PC-9 (cell line): ENCODE measurements at regions of chr2 and their contacts with region 1.

Region 1: DNA sequence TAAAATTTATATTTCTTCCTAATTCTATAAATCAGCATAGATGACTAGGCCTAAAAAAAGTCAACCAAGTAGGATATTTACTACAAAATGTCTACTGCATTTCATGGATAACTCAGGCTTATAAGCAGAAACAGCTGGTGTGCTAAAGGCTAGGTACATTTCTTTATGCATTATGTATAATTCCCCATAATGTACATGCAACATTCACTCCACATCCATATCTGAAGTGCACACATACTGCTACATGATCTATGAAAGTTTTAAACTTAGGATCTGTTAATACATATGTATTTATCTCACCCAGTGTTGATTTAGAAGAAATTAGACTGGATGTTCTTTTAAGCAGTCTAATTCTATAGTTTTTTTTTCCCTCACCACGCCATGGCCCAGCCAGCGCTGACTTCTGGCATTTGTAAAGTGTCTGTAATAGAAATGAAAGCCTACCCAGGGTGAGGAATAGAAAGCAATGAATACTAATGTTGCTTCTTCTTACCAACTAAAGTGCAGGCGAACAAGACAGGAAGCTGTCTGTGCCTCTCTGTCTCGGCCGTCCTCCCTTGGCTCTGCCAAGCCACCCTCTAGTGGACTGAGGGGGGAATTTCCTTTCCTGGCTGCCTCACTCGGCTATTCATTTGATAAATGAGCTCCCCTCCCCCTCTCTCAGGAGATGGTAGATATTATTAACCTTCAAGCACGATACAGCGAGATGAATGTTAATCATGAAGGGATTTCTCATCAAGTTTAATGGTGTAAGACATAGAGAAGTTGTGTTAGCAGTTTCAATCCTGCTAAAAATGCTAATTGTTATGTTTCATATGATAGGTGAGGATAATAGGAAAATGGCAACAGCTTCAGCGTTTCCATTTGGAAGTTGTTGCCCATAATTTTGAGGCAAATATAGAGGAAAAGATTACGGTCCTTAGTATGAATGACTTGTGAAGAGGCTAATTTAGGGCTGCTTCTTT is 384.5 kb downstream of the MTX2 start:
- DNase-seq: peak in 1 of 2 experiments; percentile 64
- H3K4me3 ChIP-seq: no peak overlapping the region
- H3K27ac ChIP-seq: no peak overlapping the region
- H3K4me1 ChIP-seq: no peaks in the 10 kb centered on the region
- H3K27me3 ChIP-seq: peaks cover 8% of the 10 kb centered on the region; the same call in 1 of the 2 replicates
- CTCF ChIP-seq: peak; percentile 84

Region 2: DNA sequence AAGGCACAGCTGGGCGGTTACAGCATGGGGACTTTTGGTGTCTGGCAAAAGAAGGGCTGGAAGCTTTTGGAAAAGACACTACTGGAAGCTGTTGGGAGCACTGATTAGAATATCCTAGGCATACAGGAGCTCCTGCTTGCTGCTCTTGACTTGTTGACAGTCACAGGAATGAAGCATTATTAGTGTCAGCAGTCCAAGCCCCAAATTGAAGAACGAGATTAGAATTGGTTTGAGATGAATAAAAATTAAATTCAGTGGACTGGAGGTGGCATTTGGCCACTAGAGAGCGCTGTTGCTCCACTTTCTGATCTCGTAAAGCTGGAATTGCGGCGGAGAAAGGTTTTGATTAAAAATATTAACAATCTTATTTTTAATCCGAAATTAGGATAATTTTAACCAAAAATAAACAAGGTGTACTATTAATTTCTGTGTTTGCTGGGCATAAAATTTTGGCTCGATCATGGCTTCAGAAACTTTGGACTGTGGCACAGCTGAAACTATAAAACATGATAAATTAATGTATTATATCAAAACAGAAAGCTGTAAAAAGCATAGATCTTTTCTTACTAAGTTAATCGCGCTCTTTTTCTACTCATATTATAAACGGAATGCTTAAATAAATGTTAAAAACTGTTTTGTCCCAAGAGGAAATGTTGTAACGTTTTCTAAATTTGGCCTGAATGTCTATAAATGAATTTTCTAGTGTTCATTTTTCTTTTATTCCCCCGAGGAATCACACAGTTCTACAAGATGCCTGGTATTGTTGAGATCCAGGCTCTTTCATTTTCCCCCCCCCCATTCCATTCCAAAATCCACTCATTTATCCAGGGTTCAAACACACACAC is 526.6 kb before region 1 on chr2:
- CTCF ChIA-PET with region 1: interaction called, 15 read pairs
- POLR2A ChIA-PET with region 1: no interaction called
- intact Hi-C with region 1: loop called (anchors 1 kb)
- DNase-seq: peak; percentile 43 to 67
- H3K4me3 ChIP-seq: 0 out of 2 replicates have a peak overlapping the region, but pooled peaks have one; percentile 3
- H3K27ac ChIP-seq: no peak overlapping the region
- H3K4me1 ChIP-seq: no peaks in the 10 kb centered on the region
- H3K27me3 ChIP-seq: peaks cover 52% of the 10 kb centered on the region
- CTCF ChIP-seq: peak; percentile 100

Region 3: GRCh38 chr2:176206682-176207081 is 447.1 kb before region 1 on chr2:
- CTCF ChIA-PET with region 1: interaction called, 16 read pairs
- POLR2A ChIA-PET with region 1: no interaction called
- intact Hi-C with region 1: no loop called
- DNase-seq: no peak
- H3K4me3 ChIP-seq: no peak overlapping the region
- H3K27ac ChIP-seq: no peak overlapping the region
- H3K4me1 ChIP-seq: no peaks in the 10 kb centered on the region
- H3K27me3 ChIP-seq: peaks cover 19% of the 10 kb centered on the region
- CTCF ChIP-seq: no peak

Region 4: DNA sequence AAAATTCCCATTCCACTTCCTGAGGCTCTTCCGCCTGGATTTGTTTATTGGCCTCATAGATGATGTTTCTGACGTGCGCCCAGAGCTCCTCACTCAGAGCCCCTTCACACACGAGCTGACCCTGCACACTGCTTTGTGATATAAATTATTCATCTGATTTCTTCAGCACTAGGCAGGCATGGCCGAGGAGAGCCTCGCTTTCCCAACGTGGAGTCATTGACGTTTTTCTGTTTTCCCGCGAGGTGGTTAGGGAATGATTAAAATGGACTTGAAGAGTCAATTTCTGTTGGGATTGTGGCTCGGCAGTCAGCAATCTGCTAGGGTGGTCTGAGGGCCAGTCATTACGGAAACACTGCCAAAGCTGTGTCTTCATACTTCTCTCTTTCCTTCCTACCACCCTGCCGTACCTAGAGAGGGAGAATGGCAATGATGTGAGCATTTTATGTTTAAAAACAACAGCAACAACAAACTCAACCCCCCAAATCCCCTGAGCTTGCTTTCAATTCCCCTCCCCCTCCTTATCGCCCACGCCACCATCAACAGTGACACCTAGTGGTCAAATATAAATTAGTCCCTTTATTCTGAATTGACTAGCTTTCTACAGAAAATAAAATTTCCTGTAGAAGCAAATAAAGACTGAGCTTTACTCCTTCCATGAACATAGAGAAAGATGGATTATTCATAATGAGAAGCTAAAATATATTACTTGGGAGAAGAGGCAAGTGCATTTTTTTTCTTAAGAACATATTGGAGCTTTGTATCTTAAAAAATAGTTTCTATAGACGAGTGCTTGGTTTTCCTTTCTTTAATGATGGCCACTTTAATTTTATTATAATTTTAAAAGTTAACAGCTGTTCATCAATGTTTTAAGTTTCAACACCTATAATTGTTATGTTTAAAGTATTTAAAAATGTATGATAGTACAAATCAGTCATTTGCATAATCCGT is 99.4 kb before region 1 on chr2:
- CTCF ChIA-PET with region 1: interaction called, 11 read pairs
- POLR2A ChIA-PET with region 1: no interaction called
- intact Hi-C with region 1: loop called (anchors 5 kb)
- DNase-seq: peak; percentile 53 to 54
- H3K4me3 ChIP-seq: peak overlapping the region; percentile 58
- H3K27ac ChIP-seq: no peak overlapping the region
- H3K4me1 ChIP-seq: no peaks in the 10 kb centered on the region
- H3K27me3 ChIP-seq: no peaks in the 10 kb centered on the region; the same call in 1 of the 2 replicates
- CTCF ChIP-seq: peak; percentile 100

Region 5: DNA sequence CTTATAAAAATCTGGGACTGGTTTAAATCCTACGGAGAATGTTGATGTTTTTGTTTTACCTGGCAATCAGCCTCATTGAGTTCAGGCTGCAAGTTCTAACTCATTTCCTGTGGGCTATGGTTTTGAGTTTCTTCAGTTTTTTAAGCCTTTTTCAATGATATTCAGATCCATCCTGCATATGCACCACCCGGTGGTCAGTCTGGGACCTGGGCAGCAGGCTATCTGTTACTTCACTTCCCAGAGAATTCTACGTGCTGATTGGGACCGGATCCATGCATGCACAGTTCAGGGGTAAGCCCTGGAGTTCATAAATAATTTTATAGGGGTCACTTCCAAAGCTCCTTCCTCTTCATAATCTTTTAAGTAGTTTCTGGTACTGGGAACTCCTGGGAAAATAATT is 219.6 kb after region 1 on chr2:
- CTCF ChIA-PET with region 1: no interaction called
- POLR2A ChIA-PET with region 1: no interaction called
- intact Hi-C with region 1: no loop called
- DNase-seq: no peak
- H3K4me3 ChIP-seq: no peak overlapping the region
- H3K27ac ChIP-seq: no peak overlapping the region
- H3K4me1 ChIP-seq: no peaks in the 10 kb centered on the region
- H3K27me3 ChIP-seq: no peaks in the 10 kb centered on the region
- CTCF ChIP-seq: no peak

Region 6: DNA sequence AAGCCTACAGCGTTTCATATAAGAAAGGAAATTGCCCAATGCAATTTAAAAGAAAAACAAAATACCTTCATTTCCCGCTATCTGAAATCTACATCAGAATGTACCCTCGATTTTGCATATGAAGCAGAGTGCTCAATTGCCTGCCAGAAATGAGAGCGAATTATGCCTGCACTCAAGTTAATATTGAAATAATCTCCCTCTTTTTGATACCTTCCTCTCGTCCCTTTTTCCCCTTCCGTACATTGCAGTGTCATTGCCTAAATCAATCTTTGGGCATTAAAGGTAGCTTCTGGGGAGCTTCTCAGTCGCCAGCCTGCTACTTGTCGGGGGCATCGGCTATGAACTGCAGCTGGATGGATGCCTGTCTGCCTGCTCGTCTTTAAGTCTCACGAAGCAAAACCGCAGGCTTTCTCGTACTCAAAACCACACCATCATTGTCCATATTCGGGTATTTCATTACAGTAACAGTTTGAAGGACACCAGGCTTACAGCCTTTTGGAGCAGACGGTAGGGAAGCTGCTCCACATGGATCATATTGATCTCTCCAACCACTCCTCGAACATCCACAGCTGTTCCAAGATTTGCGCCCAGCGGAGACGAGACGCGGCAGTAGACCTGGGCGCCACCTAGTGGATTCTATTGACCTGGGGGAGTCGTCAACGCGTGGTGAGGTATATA is 494.9 kb after region 1 on chr2:
- CTCF ChIA-PET with region 1: interaction called, 4 read pairs
- POLR2A ChIA-PET with region 1: no interaction called
- intact Hi-C with region 1: loop called (anchors 2 kb)
- DNase-seq: peak; percentile 76 to 86
- H3K4me3 ChIP-seq: peak overlapping the region; percentile 46
- H3K27ac ChIP-seq: no peak overlapping the region
- H3K4me1 ChIP-seq: peaks cover 8% of the 10 kb centered on the region
- H3K27me3 ChIP-seq: peaks cover 13% of the 10 kb centered on the region
- CTCF ChIP-seq: peak; percentile 97